Activated CD8-positive, alpha-beta T cell treated with anti-CD3 and anti-CD28 coated beads, Interleukin-2, amount 10 ng/mL, durations not matched to agents 7 days and 5 days (primary cell): ENCODE measurements at regions of chr22 and their contacts with region 1.

Region 1: DNA sequence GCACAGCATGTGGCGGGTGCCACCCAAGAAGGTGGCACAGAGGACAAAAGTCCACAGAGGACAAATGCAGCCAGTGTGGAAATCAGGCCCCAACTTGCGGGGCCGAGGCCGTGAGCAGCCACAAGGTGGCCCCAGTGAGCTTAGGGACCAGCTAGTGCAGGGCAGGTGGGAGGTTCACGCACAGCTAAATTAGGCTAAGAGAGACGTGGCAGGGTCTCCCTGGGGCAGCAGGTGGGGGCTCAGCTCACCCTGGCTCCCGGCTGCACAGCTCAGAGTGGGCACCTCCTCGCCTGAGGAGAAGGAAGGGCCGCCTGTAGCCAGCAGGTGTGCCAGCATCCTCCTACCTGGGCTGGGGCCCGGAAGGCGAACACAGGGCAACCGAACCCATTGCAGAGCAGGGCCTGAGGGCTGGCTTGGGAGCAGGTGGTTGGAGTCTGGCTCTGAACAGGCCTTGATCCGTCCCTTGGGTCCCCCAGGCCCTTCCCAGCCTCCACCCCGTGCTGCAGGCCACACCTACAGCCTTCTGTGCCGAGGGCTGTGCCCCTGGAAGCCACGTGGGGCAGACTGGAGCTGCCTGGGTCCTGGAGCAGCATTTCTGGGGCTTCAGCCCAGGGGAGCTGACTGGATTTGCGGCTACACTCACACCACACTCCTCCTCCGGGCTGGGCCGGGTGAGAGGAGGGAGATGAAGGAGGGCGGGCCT is 26.1 kb upstream of the CELSR1 start:
- DNase-seq: peak; percentile 83
- ATAC-seq: peak; percentile 91
- H3K4me3 Mint-ChIP-seq: no peak overlapping the region
- H3K27ac Mint-ChIP-seq: peak overlapping the region; percentile 61
- H3K4me1 Mint-ChIP-seq: peaks cover 22% of the 10 kb centered on the region
- H3K27me3 Mint-ChIP-seq: peaks cover 4% of the 10 kb centered on the region

Region 2: GRCh38 chr22:46551321-46551720 is 12.2 kb before region 1 on chr22:
- CTCF ChIA-PET with region 1: interaction called, 20 read pairs
- POLR2A ChIA-PET with region 1: no interaction called
- DNase-seq: no peak
- ATAC-seq: no peak
- H3K4me3 Mint-ChIP-seq: no peak overlapping the region
- H3K27ac Mint-ChIP-seq: no peak overlapping the region
- H3K4me1 Mint-ChIP-seq: no peaks in the 10 kb centered on the region
- H3K27me3 Mint-ChIP-seq: peaks cover 4% of the 10 kb centered on the region

Region 3: GRCh38 chr22:46576556-46577367 is 13.2 kb after region 1 on chr22:
- CTCF ChIA-PET with region 1: interaction called, 15 read pairs
- POLR2A ChIA-PET with region 1: interaction called, 3 read pairs
- DNase-seq: peak; percentile 57
- ATAC-seq: peak; percentile 68
- H3K4me3 Mint-ChIP-seq: peak overlapping the region; percentile 76
- H3K27ac Mint-ChIP-seq: no peak overlapping the region
- H3K4me1 Mint-ChIP-seq: peaks cover 47% of the 10 kb centered on the region
- H3K27me3 Mint-ChIP-seq: no peaks in the 10 kb centered on the region

Region 4: GRCh38 chr22:46625113-46625842 is 61.7 kb after region 1 on chr22:
- CTCF ChIA-PET with region 1: interaction called, 17 read pairs
- POLR2A ChIA-PET with region 1: no interaction called
- DNase-seq: no peak
- ATAC-seq: no peak
- H3K4me3 Mint-ChIP-seq: no peak overlapping the region
- H3K27ac Mint-ChIP-seq: no peak overlapping the region
- H3K4me1 Mint-ChIP-seq: peaks cover 3% of the 10 kb centered on the region
- H3K27me3 Mint-ChIP-seq: no peaks in the 10 kb centered on the region